ENCODE measurements at regions of chr4 and their contacts with region 1.

Region 1: GRCh38 chr4:75698162-75698962 is 25.2 kb upstream of the G3BP2 start:
- DNase-seq: peak in 5 of 9 experiments; percentile 2 to 70 (median 38)
- ATAC-seq: peak; percentile 58
- H3K4me3 ChIP-seq: no peak overlapping the region
- H3K4me3 Mint-ChIP-seq: peak overlapping the region; percentile 20
- H3K27ac ChIP-seq: peak overlapping the region; percentile 13 to 80
- H3K27ac Mint-ChIP-seq: peak overlapping the region; percentile 85
- H3K4me1 ChIP-seq: peaks cover 31% of the 10 kb centered on the region
- H3K4me1 Mint-ChIP-seq: peaks cover 41% of the 10 kb centered on the region
- H3K27me3 ChIP-seq: no peaks in the 10 kb centered on the region
- H3K27me3 Mint-ChIP-seq: no peaks in the 10 kb centered on the region
- CTCF ChIP-seq: no peak

Region 2: GRCh38 chr4:75432683-75433082 is 265.7 kb before region 1 on chr4:
- CTCF ChIA-PET with region 1: no interaction called
- POLR2A ChIA-PET with region 1: no interaction called
- intact Hi-C with region 1: no loop called
- DNase-seq: peak in 2 of 9 experiments; percentile 2 to 7
- ATAC-seq: no peak
- H3K4me3 ChIP-seq: no peak overlapping the region
- H3K4me3 Mint-ChIP-seq: no peak overlapping the region
- H3K27ac ChIP-seq: no peak overlapping the region
- H3K27ac Mint-ChIP-seq: no peak overlapping the region
- H3K4me1 ChIP-seq: no peaks in the 10 kb centered on the region
- H3K4me1 Mint-ChIP-seq: no peaks in the 10 kb centered on the region
- H3K27me3 ChIP-seq: no peaks in the 10 kb centered on the region
- H3K27me3 Mint-ChIP-seq: peaks cover 23% of the 10 kb centered on the region
- CTCF ChIP-seq: no peak

Region 3: GRCh38 chr4:75679876-75680575 is 18.3 kb before region 1 on chr4:
- CTCF ChIA-PET with region 1: no interaction called
- POLR2A ChIA-PET with region 1: interaction called, 3 read pairs
- intact Hi-C with region 1: loop called in 1 of 2 experiments (anchors 2 kb)
- DNase-seq: no peak
- ATAC-seq: no peak
- H3K4me3 ChIP-seq: no peak overlapping the region
- H3K4me3 Mint-ChIP-seq: no peak overlapping the region
- H3K27ac ChIP-seq: no peak overlapping the region
- H3K27ac Mint-ChIP-seq: no peak overlapping the region
- H3K4me1 ChIP-seq: peaks cover 15% of the 10 kb centered on the region
- H3K4me1 Mint-ChIP-seq: peaks cover 20% of the 10 kb centered on the region
- H3K27me3 ChIP-seq: no peaks in the 10 kb centered on the region
- H3K27me3 Mint-ChIP-seq: no peaks in the 10 kb centered on the region
- CTCF ChIP-seq: no peak

Region 4: GRCh38 chr4:75686346-75686745 is 12.0 kb before region 1 on chr4:
- CTCF ChIA-PET with region 1: no interaction called
- POLR2A ChIA-PET with region 1: interaction called, 3 read pairs
- intact Hi-C with region 1: loop called in 1 of 2 experiments (anchors 1 kb)
- DNase-seq: peak in 8 of 9 experiments; percentile 9 to 78 (median 53)
- ATAC-seq: peak; percentile 81
- H3K4me3 ChIP-seq: no peak overlapping the region
- H3K4me3 Mint-ChIP-seq: peak overlapping the region; percentile 17
- H3K27ac ChIP-seq: peak overlapping the region in 1 of 2 experiments; percentile 57
- H3K27ac Mint-ChIP-seq: peak overlapping the region; percentile 71
- H3K4me1 ChIP-seq: peaks cover 38% of the 10 kb centered on the region
- H3K4me1 Mint-ChIP-seq: peaks cover 45% of the 10 kb centered on the region
- H3K27me3 ChIP-seq: no peaks in the 10 kb centered on the region
- H3K27me3 Mint-ChIP-seq: no peaks in the 10 kb centered on the region
- CTCF ChIP-seq: no peak